ENCODE measurements at regions of chr10 and their contacts with region 1.

Region 1: DNA sequence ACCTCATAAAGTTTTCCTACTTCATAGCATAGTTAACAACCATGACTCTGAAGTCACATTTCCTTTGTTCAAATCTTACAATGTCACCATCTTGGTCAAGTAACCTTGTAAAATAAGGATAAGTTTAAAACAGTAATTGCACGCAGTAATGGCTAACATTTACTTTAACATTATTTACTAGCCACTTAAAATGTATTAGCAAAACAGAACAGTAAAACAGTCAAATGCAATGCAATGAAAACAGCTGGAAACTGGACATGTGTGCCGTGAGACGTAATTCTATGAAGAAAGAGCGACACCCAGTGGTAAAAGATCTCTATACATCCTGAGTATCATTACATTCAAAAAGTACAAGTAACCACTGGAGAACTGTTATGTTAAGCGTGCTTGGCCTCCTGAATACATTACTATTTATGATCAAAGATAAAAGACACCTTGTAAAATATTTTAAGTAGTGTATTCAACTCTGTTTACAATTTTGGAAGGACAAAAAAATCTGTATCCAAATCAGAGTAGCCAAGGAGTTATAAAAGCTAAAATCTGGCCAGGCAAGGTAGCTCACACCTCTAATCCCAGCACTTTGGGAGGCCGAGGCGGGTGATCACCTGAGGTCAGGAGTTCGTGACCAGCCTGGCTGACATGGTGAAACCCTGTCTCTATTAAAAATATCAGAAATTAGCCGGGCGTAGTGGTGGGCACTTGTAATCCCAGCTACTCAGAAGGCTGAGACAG is 27.2 kb downstream of the ATE1 start:
- DNase-seq: no peak
- ATAC-seq: peak; percentile 40
- H3K4me3 Mint-ChIP-seq: no peak overlapping the region
- H3K27ac Mint-ChIP-seq: no peak overlapping the region
- H3K4me1 Mint-ChIP-seq: peaks cover 3% of the 10 kb centered on the region
- H3K27me3 Mint-ChIP-seq: no peaks in the 10 kb centered on the region
- CTCF ChIP-seq: no peak

Region 2: GRCh38 chr10:120948889-120949608 is 951.6 kb before region 1 on chr10:
- CTCF ChIA-PET with region 1: no interaction called
- POLR2A ChIA-PET with region 1: no interaction called
- intact Hi-C with region 1: loop called (anchors 1 kb)
- DNase-seq: peak; percentile 47
- ATAC-seq: peak; percentile 64
- H3K4me3 Mint-ChIP-seq: peak overlapping the region; percentile 64
- H3K27ac Mint-ChIP-seq: no peak overlapping the region
- H3K4me1 Mint-ChIP-seq: peaks cover 9% of the 10 kb centered on the region
- H3K27me3 Mint-ChIP-seq: peaks cover 39% of the 10 kb centered on the region
- CTCF ChIP-seq: no peak

Measured in activated B cell treated with CpG ODN at 0.5 μM for 24 hours (primary cell).